Colonic mucosa (tissue), 4 donors: ENCODE measurements at regions of chr18 and their contacts with region 1.

Region 1: GRCh38 chr18:79944126-79944741 is 7.2 kb downstream of the SLC66A2 start:
- DNase-seq: peak; percentile 59
- H3K4me3 ChIP-seq: no peak overlapping the region
- H3K27ac ChIP-seq: peak overlapping the region; percentile 63
- H3K4me1 ChIP-seq: peaks cover 29% of the 10 kb centered on the region
- H3K27me3 ChIP-seq: no peaks in the 10 kb centered on the region
- CTCF ChIP-seq: no peak

Region 2: GRCh38 chr18:80147418-80148325 is 203.4 kb after region 1 on chr18:
- intact Hi-C with region 1: loop called (anchors 10 kb)
- DNase-seq: peak; percentile 91
- H3K4me3 ChIP-seq: peak overlapping the region; percentile 47
- H3K27ac ChIP-seq: peak overlapping the region; percentile 14
- H3K4me1 ChIP-seq: no peaks in the 10 kb centered on the region
- H3K27me3 ChIP-seq: no peaks in the 10 kb centered on the region
- CTCF ChIP-seq: no peak